ENCODE measurements at regions of chr17 and their contacts with region 1.

Region 1: GRCh38 chr17:14359163-14360020 is 58.5 kb downstream of the HS3ST3B1 start:
- DNase-seq: no peak
- ATAC-seq: no peak
- H3K4me3 ChIP-seq: no peak overlapping the region
- H3K27ac ChIP-seq: no peak overlapping the region
- H3K4me1 ChIP-seq: no peaks in the 10 kb centered on the region
- H3K27me3 ChIP-seq: no peaks in the 10 kb centered on the region
- CTCF ChIP-seq: no peak

Region 2: GRCh38 chr17:14396547-14396946 is 37.2 kb after region 1 on chr17:
- CTCF ChIA-PET with region 1: no interaction called
- POLR2A ChIA-PET with region 1: interaction called, 13 read pairs
- in situ Hi-C with region 1: no loop called
- intact Hi-C with region 1: no loop called
- DNase-seq: no peak
- ATAC-seq: no peak
- H3K4me3 ChIP-seq: no peak overlapping the region
- H3K27ac ChIP-seq: no peak overlapping the region
- H3K4me1 ChIP-seq: no peaks in the 10 kb centered on the region
- H3K27me3 ChIP-seq: no peaks in the 10 kb centered on the region
- CTCF ChIP-seq: no peak

Region 3: DNA sequence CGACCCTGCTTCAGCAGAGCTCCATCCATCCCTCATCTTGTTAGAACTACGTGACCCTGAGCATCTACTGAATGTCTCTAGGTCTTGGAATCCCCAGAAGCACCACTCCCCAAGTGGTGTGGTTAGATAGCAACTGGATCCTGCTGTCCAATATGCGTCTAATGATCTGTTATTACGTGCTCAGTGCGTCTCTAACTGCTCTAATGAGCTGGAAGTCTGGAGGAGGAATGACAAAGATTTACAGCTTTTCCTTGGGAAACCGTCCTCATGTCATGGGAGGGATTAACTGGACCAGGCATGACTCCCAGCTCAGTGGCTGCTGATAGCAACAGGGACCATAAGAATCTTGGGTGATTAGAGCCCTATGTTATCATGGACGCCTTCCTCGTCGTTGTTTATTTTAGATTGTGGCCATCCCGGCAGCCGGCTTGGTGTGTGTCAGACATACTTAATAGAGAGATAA is 92.4 kb after region 1 on chr17:
- CTCF ChIA-PET with region 1: no interaction called
- POLR2A ChIA-PET with region 1: no interaction called
- in situ Hi-C with region 1: no loop called
- intact Hi-C with region 1: no loop called
- DNase-seq: no peak
- ATAC-seq: no peak
- H3K4me3 ChIP-seq: no peak overlapping the region
- H3K27ac ChIP-seq: no peak overlapping the region
- H3K4me1 ChIP-seq: no peaks in the 10 kb centered on the region
- H3K27me3 ChIP-seq: no peaks in the 10 kb centered on the region
- CTCF ChIP-seq: no peak

Measured in Panc1 (cell line).